Activated naive CD8-positive, alpha-beta T cell treated with anti-CD3 and anti-CD28 coated beads, Interleukin-2, amount 10 ng/mL, durations not matched to agents 7 days and 5 days (primary cell): ENCODE measurements at regions of chr15 and their contacts with region 1.

Region 1: GRCh38 chr15:75639709-75640482 is at the start of gene IMP3:
- DNase-seq: peak; percentile 92
- ATAC-seq: peak; percentile 92
- H3K4me3 Mint-ChIP-seq: peak within 1 kb of the TSS; percentile 93
- H3K27ac Mint-ChIP-seq: peak within 1 kb of the TSS; percentile 86
- H3K4me1 Mint-ChIP-seq: peaks cover 29% of the 10 kb centered on the region
- H3K27me3 Mint-ChIP-seq: peaks cover 2% of the 10 kb centered on the region
- total RNA-seq, gene IMP3: 85.3 to 87.1 TPM

Region 2: DNA sequence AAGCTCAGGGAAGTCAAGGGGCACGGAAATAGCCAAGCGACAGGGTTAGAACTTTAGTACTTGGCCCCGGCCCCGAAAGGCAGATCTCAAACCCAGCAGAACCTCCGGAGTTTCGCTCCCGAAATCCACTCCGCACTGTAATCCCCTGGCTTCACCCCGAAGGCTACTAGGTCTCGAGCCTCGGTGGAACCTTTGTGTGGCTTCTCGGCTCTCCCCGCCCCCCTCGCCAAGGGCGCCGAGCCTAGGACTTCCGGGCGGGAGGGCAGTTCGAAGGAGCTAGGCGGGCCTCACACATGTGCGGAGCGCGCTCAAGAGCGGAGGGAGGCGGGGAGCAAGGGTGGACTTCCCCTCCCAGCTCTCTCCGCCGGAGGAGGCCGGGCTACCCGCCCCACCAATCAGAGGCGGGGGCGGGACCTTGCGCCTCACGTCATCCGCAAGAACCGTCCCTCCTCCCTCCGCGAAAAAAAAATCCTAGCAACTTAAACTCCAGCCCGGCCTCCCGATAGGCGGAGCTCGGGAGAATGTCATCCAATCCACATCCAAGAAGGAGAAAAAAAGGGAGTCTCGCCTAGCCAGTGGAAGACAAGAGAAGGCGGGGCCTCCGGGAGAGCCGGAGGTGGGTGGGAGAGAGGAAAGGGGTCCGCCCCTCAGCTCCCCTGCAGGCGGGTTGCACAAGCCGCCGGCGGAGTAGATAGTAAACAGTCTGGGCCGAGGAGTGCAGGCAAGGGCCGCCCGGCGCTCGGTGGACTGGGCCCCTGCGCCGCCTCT is 186.0 kb before region 1 on chr15:
- POLR2A ChIA-PET with region 1: interaction called, 168 read pairs
- DNase-seq: peak; percentile 95
- ATAC-seq: peak; percentile 38
- H3K4me3 Mint-ChIP-seq: peak overlapping the region; percentile 95
- H3K27ac Mint-ChIP-seq: peak overlapping the region; percentile 99
- H3K4me1 Mint-ChIP-seq: peaks cover 21% of the 10 kb centered on the region
- H3K27me3 Mint-ChIP-seq: no peaks in the 10 kb centered on the region

Region 3: GRCh38 chr15:75578948-75579920 is 60.7 kb before region 1 on chr15 and contains the start of gene PTPN9:
- POLR2A ChIA-PET with region 1: interaction called, 38 read pairs
- DNase-seq: peak; percentile 78
- ATAC-seq: peak; percentile 83
- H3K4me3 Mint-ChIP-seq: peak within 1 kb of the TSS; percentile 94
- H3K27ac Mint-ChIP-seq: peak within 1 kb of the TSS; percentile 90
- H3K4me1 Mint-ChIP-seq: peaks cover 18% of the 10 kb centered on the region
- H3K27me3 Mint-ChIP-seq: no peaks in the 10 kb centered on the region
- total RNA-seq, gene PTPN9: 35.8 to 37.5 TPM

Region 4: GRCh38 chr15:75597667-75598341 is 42.1 kb before region 1 on chr15:
- POLR2A ChIA-PET with region 1: interaction called, 49 read pairs
- DNase-seq: peak; percentile 47
- ATAC-seq: peak; percentile 89
- H3K4me3 Mint-ChIP-seq: peak overlapping the region; percentile 76
- H3K27ac Mint-ChIP-seq: peak overlapping the region; percentile 92
- H3K4me1 Mint-ChIP-seq: peaks cover 34% of the 10 kb centered on the region
- H3K27me3 Mint-ChIP-seq: no peaks in the 10 kb centered on the region

Region 5: GRCh38 chr15:75625542-75626347 is 14.2 kb before region 1 on chr15 and contains the start of gene SNUPN:
- POLR2A ChIA-PET with region 1: interaction called, 80 read pairs
- DNase-seq: peak; percentile 91
- ATAC-seq: peak; percentile 83
- H3K4me3 Mint-ChIP-seq: peak within 1 kb of the TSS; percentile 88
- H3K27ac Mint-ChIP-seq: peak within 1 kb of the TSS; percentile 92
- H3K4me1 Mint-ChIP-seq: peaks cover 27% of the 10 kb centered on the region
- H3K27me3 Mint-ChIP-seq: no peaks in the 10 kb centered on the region
- total RNA-seq, gene SNUPN: 27.1 to 30.4 TPM

Region 6: DNA sequence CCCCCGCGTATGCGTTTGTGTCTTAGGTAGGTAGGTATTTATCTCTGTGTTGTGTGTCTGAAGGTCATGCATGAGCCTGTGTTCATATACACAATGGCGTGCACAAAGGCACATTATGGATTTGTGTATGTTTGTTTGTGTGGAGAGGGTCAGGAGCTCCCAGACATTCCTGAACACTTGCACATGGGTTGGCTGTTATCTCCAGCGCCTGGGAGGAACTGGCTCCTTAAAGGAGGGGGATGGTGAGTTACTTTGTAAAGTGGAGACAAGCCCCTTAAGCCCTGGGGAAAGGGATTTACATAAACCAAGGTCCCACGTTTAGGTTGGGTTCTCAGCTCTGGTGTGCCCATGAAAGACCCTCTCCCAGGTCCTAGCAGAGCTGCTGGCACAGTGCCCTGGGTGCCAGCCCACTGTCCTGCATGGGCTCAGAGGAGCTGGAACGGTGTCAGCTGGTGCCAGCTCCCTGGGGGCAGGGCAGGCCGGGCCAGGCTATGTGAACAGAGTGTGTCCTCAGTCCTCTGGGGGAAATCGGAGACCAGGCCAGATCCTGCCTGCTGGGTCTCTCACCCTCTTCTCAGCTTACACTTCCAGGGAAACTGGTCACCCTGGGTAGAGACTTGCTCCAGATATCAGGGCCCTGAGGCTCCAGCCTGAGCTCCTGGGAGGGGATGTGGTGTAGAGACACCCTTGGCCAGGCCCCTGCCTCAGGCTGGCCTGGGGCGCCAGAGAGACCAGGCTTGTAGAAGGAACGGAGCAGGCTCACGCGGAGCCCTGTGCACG is 32.9 kb after region 1 on chr15:
- POLR2A ChIA-PET with region 1: no interaction called
- DNase-seq: no peak
- ATAC-seq: no peak
- H3K4me3 Mint-ChIP-seq: no peak overlapping the region
- H3K27ac Mint-ChIP-seq: no peak overlapping the region
- H3K4me1 Mint-ChIP-seq: no peaks in the 10 kb centered on the region
- H3K27me3 Mint-ChIP-seq: no peaks in the 10 kb centered on the region